Endothelial cell of umbilical vein (primary cell): ENCODE measurements at regions of chr10 and their contacts with region 1.

Region 1: DNA sequence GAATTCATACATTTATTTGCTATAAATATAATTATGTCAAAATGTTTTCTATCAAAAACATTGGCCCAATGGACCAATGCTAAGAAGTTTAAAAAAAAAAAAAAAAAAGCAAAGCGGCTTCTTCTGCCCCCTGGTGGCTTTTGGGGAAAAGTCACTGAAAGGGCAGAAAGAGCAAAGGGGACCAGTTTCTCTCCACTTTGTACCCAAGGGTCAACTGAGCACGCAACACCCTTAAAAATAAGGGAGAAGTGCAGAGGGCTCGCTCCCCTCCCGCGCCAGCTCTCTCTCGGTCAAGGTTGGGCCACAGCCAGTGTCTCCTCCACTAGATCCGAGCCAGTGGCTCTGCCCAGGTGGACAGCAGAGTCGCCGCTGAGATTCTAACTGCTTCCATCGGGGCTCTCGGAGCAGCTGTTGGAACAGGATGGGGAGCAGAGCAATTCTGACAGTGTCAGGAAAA is 136.4 kb upstream of the FGFR2 start:
- DNase-seq: no peak
- H3K4me3 ChIP-seq: no peak overlapping the region
- H3K27ac ChIP-seq: no peak overlapping the region
- H3K4me1 ChIP-seq: peaks cover 19% of the 10 kb centered on the region
- H3K27me3 ChIP-seq: no peaks in the 10 kb centered on the region
- CTCF ChIP-seq: peak; percentile 65 to 71
- POLR2A ChIP-seq: no peak

Region 2: GRCh38 chr10:120942806-120943413 is 791.7 kb before region 1 on chr10:
- CTCF ChIA-PET with region 1: interaction called, 3 read pairs
- POLR2A ChIA-PET with region 1: no interaction called
- dilution Hi-C with region 1: no loop called
- intact Hi-C with region 1: loop called (anchors 1 kb)
- DNase-seq: peak; percentile 81
- H3K4me3 ChIP-seq: no peak overlapping the region
- H3K27ac ChIP-seq: no peak overlapping the region
- H3K4me1 ChIP-seq: no peaks in the 10 kb centered on the region
- H3K27me3 ChIP-seq: no peaks in the 10 kb centered on the region
- CTCF ChIP-seq: peak; percentile 83 to 85
- POLR2A ChIP-seq: no peak

Region 3: DNA sequence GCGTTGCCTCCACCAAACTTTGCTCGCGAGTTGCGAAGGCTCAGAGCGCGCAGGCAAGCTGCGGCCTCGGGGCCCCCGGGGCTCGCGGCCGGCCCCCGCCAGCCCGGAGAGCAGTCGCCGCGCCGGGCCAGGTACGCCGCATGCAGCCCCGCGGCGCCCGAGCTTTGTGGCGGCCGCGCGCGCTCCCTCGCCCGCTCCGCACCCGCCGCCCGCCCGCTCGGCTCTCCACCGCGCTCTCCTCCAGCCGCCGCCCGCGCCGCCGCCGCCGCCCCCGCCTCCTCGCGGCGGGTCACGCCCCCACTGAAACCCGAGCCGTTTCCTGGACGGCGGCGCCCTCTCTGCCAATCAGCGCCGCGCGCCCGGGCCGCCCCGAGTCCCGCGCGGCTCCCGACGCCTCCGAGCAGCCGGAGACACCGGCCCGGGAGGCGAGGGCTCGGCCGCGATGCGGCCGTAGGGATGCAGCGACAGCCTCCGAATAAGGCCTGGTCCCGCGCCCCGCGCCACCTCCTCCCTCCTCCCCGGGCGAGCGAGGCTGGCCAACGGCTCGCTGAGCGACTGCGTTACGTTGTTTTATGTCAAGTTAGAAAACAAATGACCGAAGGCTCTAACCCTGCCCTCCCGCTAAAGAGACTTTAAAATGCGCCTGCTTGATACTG is 136.3 kb before region 1 on chr10 and contains the start of gene FGFR2:
- CTCF ChIA-PET with region 1: no interaction called
- POLR2A ChIA-PET with region 1: no interaction called
- dilution Hi-C with region 1: no loop called
- intact Hi-C with region 1: loop called (anchors 1 kb)
- DNase-seq: peak; percentile 73
- H3K4me3 ChIP-seq: peak within 1 kb of the TSS; percentile 30 to 38 (median 35)
- H3K27ac ChIP-seq: no peak within 1 kb of the TSS
- H3K4me1 ChIP-seq: peaks cover 5% of the 10 kb centered on the region
- H3K27me3 ChIP-seq: peaks cover 37 to 49% of the 10 kb centered on the region in 2 experiments
- CTCF ChIP-seq: no peak
- POLR2A ChIP-seq: no peak
- total RNA-seq, gene FGFR2: not detected in 2 replicates

Region 4: GRCh38 chr10:121753726-121754476 is 19.3 kb after region 1 on chr10:
- CTCF ChIA-PET with region 1: interaction called, 6 read pairs
- POLR2A ChIA-PET with region 1: no interaction called
- dilution Hi-C with region 1: no loop called
- intact Hi-C with region 1: loop called (anchors 2 kb)
- DNase-seq: peak; percentile 88
- H3K4me3 ChIP-seq: peak overlapping the region in 1 of 3 experiments; percentile 40
- H3K27ac ChIP-seq: peak overlapping the region; percentile 90
- H3K4me1 ChIP-seq: peaks cover 17% of the 10 kb centered on the region
- H3K27me3 ChIP-seq: no peaks in the 10 kb centered on the region
- CTCF ChIP-seq: peak; percentile 22 to 29
- POLR2A ChIP-seq: no peak

Region 5: DNA sequence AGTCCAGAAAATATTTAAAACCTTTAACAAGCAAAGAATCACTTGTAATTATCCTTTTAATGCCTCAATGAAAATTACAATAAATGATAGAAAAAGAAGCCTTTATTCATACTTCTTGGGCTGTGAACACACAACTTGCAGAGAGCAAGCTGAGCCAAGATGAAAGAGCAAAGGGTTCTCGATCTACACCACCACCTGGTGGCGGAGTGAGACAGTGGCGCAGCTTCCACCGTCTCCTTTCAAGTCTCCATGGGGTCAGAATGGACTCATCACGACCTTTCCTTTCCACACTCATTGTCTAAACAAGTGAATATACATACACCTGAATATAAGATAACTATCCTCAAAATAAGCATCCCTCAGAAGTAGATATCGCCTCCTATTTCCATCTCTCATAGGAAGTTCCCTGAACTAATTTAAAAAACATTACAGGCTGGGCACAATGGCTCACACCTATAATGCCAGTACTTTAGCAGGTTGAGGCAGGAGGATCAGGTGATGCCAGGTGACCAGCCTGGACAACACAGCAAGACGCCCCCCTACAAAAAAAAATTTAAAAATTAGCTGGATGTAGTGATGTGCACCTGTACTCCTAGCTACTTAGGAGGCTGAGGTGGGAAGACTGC is 152.5 kb after region 1 on chr10:
- CTCF ChIA-PET with region 1: interaction called, 3 read pairs
- POLR2A ChIA-PET with region 1: no interaction called
- dilution Hi-C with region 1: no loop called
- intact Hi-C with region 1: loop called (anchors 1 kb)
- DNase-seq: peak; percentile 76
- H3K4me3 ChIP-seq: no peak overlapping the region
- H3K27ac ChIP-seq: no peak overlapping the region
- H3K4me1 ChIP-seq: peaks cover 6% of the 10 kb centered on the region
- H3K27me3 ChIP-seq: no peaks in the 10 kb centered on the region
- CTCF ChIP-seq: peak; percentile 82 to 85
- POLR2A ChIP-seq: no peak